CD4-positive, alpha-beta T cell (primary cell): ENCODE measurements at regions of chr3 and their contacts with region 1.

Region 1: GRCh38 chr3:60010781-60011180 is 961.0 kb upstream of the CFAP20DC start:
- DNase-seq: peak; percentile 37 to 92 (median 52)
- ATAC-seq: peak; percentile 94
- H3K4me3 ChIP-seq: peak overlapping the region; percentile 29
- H3K4me3 Mint-ChIP-seq: peak overlapping the region; percentile 86
- H3K27ac ChIP-seq: peak overlapping the region; percentile 65 to 86
- H3K27ac Mint-ChIP-seq: peak overlapping the region; percentile 94
- H3K4me1 ChIP-seq: peaks cover 65% of the 10 kb centered on the region
- H3K4me1 Mint-ChIP-seq: peaks cover 93% of the 10 kb centered on the region
- H3K27me3 ChIP-seq: no peaks in the 10 kb centered on the region
- H3K27me3 Mint-ChIP-seq: no peaks in the 10 kb centered on the region
- CTCF ChIP-seq: no peak

Region 2: DNA sequence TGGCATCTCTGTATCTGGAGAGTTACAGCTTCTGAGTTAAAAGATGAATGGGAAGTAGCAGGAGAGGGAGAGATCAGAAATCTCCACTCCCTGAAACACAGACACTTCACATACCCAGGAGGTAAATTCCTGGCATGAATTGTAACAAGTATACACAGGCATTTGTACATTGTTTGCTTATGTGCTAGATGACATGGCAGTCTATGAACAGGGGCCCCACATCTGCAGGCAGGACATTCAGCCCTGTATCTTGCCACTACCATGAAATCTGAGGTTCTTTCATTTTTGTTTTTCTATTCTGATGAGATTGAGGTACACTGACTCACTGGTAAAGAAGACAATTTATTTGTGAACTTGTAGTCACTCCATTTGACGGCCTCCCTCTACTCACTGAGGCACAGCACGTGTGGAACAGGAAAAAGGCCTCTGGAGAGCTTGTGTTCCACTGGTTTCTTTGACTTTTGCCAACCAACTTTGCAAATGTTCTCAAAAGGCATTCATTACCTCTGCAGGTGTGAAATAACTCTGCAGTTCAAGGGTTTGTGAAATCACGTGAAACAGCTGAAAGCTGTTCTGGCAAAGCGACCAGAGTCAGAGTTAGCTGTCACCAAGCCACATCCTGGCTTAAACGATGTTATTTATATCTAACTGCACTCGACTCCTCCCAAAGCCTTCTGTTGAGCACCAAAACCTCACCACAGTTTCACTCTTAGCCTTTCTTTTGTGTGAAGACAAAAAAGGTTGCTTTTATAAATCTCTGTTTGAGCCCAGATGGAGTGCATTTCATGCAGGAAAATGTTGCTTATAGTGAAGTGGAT is 559.6 kb before region 1 on chr3:
- CTCF ChIA-PET with region 1: no interaction called
- POLR2A ChIA-PET with region 1: interaction called, 5 read pairs
- intact Hi-C with region 1: loop called in 1 of 2 experiments (anchors 10 kb)
- DNase-seq: peak; percentile 20 to 94 (median 50)
- ATAC-seq: peak; percentile 91
- H3K4me3 ChIP-seq: peak overlapping the region; percentile 0
- H3K4me3 Mint-ChIP-seq: peak overlapping the region; percentile 38
- H3K27ac ChIP-seq: peak overlapping the region; percentile 61 to 91
- H3K27ac Mint-ChIP-seq: peak overlapping the region; percentile 96
- H3K4me1 ChIP-seq: peaks cover 57% of the 10 kb centered on the region
- H3K4me1 Mint-ChIP-seq: peaks cover 86% of the 10 kb centered on the region
- H3K27me3 ChIP-seq: no peaks in the 10 kb centered on the region
- H3K27me3 Mint-ChIP-seq: no peaks in the 10 kb centered on the region
- CTCF ChIP-seq: no peak

Region 3: DNA sequence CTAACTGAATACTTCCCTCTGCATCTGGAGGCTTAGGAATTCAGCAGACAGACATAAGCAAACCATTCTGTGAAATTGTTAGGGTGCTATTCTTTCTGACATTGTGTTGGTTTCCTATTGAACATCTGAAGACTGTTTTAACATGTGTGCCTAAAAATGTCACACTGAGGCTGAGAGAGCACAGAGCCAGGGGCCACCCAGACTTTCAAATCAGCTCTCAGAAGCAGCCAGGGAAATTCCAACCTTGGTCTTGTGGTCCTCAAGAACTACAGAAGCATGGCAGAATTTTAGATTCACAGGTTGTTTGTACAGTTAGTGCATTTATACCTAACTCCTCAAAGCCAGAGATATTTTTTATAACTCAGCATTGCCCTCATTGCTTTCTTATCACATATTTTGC is 31.8 kb before region 1 on chr3:
- CTCF ChIA-PET with region 1: interaction called, 4 read pairs
- POLR2A ChIA-PET with region 1: interaction called, 13 read pairs
- intact Hi-C with region 1: loop called in 1 of 2 experiments (anchors 2 kb)
- DNase-seq: peak in 3 of 14 experiments; percentile 11 to 70 (median 65)
- ATAC-seq: peak; percentile 37
- H3K4me3 ChIP-seq: no peak overlapping the region
- H3K4me3 Mint-ChIP-seq: peak overlapping the region; percentile 20
- H3K27ac ChIP-seq: no peak overlapping the region
- H3K27ac Mint-ChIP-seq: peak overlapping the region; percentile 69
- H3K4me1 ChIP-seq: peaks cover 16% of the 10 kb centered on the region
- H3K4me1 Mint-ChIP-seq: peaks cover 78% of the 10 kb centered on the region
- H3K27me3 ChIP-seq: no peaks in the 10 kb centered on the region
- H3K27me3 Mint-ChIP-seq: no peaks in the 10 kb centered on the region
- CTCF ChIP-seq: no peak

Region 4: GRCh38 chr3:59998058-59998457 is 12.7 kb before region 1 on chr3:
- CTCF ChIA-PET with region 1: interaction called, 3 read pairs
- POLR2A ChIA-PET with region 1: interaction called, 24 read pairs
- intact Hi-C with region 1: loop called in 1 of 2 experiments (anchors 2 kb)
- DNase-seq: no peak
- ATAC-seq: no peak
- H3K4me3 ChIP-seq: no peak overlapping the region
- H3K4me3 Mint-ChIP-seq: no peak overlapping the region
- H3K27ac ChIP-seq: no peak overlapping the region
- H3K27ac Mint-ChIP-seq: no peak overlapping the region
- H3K4me1 ChIP-seq: peaks cover 26% of the 10 kb centered on the region
- H3K4me1 Mint-ChIP-seq: peaks cover 80% of the 10 kb centered on the region
- H3K27me3 ChIP-seq: no peaks in the 10 kb centered on the region
- H3K27me3 Mint-ChIP-seq: no peaks in the 10 kb centered on the region
- CTCF ChIP-seq: no peak

Region 5: DNA sequence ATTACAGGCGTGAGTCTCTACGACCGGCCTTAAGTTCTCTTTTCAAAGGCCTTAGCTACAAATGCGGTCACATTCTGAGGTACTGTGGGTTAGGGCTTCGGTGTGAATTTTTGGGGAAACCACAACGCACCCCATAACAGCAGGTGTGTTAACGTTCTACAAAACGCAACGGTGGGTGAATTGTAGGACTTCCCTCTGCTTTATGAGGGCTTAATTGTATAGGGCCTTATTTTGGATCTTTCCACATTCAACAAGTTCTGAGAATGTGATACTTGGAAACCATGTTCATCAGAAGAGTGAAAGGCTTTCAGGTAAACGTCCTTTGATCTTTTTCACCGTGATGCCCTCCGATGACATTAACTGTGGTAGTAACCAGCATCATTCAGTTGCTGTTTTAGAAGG is 37.7 kb after region 1 on chr3:
- CTCF ChIA-PET with region 1: no interaction called
- POLR2A ChIA-PET with region 1: interaction called, 16 read pairs
- intact Hi-C with region 1: loop called in 1 of 2 experiments (anchors 1 kb)
- DNase-seq: peak in 10 of 14 experiments; percentile 15 to 76 (median 35)
- ATAC-seq: peak; percentile 84
- H3K4me3 ChIP-seq: peak overlapping the region; percentile 17
- H3K4me3 Mint-ChIP-seq: peak overlapping the region; percentile 76
- H3K27ac ChIP-seq: peak overlapping the region; percentile 56 to 59
- H3K27ac Mint-ChIP-seq: peak overlapping the region; percentile 93
- H3K4me1 ChIP-seq: peaks cover 14% of the 10 kb centered on the region
- H3K4me1 Mint-ChIP-seq: peaks cover 91% of the 10 kb centered on the region
- H3K27me3 ChIP-seq: no peaks in the 10 kb centered on the region
- H3K27me3 Mint-ChIP-seq: no peaks in the 10 kb centered on the region
- CTCF ChIP-seq: no peak

Region 6: GRCh38 chr3:60064210-60065178 is 53.7 kb after region 1 on chr3:
- CTCF ChIA-PET with region 1: no interaction called
- POLR2A ChIA-PET with region 1: interaction called, 14 read pairs
- intact Hi-C with region 1: loop called (anchors 5 kb)
- DNase-seq: peak in 4 of 14 experiments; percentile 36 to 53 (median 43)
- ATAC-seq: peak; percentile 83
- H3K4me3 ChIP-seq: no peak overlapping the region
- H3K4me3 Mint-ChIP-seq: peak overlapping the region; percentile 67
- H3K27ac ChIP-seq: peak overlapping the region; percentile 25 to 67
- H3K27ac Mint-ChIP-seq: peak overlapping the region; percentile 88
- H3K4me1 ChIP-seq: peaks cover 10% of the 10 kb centered on the region
- H3K4me1 Mint-ChIP-seq: peaks cover 80% of the 10 kb centered on the region
- H3K27me3 ChIP-seq: no peaks in the 10 kb centered on the region
- H3K27me3 Mint-ChIP-seq: no peaks in the 10 kb centered on the region
- CTCF ChIP-seq: no peak